PC-3 (cell line): ENCODE measurements at regions of chr2 and their contacts with region 1.

Region 1: DNA sequence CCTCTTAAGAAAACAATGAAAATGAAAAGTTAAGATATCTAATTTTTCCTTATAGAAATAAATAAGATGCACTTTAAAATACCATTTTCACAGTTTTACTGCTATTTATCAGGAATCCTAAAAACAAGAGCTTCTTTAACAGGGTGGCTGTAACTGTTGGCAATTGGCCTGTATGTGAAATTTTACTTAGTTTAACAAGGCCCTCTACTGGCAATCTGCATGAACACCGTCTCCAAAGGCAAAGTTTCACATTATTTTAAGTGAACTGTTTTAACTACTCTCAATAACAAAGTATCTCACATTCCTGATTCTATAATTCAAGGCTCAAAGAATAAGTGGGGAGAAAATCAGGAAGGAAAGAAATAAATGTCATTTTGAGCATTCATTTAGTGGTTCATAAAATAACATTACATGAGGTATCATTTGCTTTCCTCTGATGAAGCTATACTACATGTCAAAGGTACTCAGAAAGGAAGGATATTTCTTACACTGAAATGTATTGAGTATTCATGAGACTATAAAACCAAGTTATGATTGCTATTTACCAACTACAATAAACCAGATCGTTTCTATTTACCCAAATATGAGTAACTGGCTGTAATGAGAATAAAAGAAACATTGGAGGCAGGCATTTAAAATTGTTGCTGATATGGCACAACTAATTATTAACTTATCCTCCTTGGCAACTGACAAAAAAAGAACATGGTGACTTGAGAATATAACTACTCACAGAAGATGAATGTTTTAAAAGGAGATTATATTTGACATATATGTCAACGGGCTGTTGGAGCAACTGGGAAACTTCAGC is 7.0 kb downstream of the NCKAP5 start:
- DNase-seq: peak; percentile 81
- ATAC-seq: peak; percentile 91
- H3K4me3 ChIP-seq: no peak overlapping the region
- H3K27ac ChIP-seq: peak overlapping the region; percentile 67
- H3K4me1 ChIP-seq: peaks cover 27% of the 10 kb centered on the region
- H3K27me3 ChIP-seq: no peaks in the 10 kb centered on the region
- CTCF ChIP-seq: peak; percentile 90

Region 2: DNA sequence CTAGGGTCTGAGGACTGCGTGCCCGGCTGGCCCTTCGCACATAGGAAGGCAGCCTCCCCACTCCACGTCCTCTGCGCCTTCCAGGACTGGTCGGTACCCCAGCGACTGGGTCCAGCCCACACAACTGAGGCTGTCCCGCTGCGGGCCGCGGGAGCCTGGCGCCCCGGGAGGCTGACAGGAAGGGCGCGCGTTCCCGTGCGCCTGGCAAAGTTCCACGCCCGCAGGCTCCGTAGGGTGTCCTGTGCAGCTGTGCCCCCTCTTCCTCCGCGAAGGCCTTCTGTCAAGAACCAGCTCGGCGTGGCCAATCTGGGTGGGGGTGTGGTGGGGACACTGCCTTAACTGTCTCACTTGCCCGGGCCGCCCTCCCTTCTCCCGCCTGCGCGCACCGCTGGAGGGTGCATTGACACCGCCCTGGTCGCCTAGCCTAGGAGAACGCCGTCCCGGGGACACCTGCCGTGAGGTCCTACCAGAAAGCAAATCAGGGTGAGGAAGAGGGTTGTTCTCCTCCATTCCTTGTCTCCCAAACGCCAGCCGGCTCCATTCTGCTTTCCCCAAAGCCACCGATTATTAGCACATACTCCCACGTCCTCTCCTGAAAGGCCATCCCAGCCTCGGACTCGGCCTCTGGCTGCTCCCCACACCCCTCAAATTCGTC is 890.6 kb before region 1 on chr2:
- CTCF ChIA-PET with region 1: no interaction called
- POLR2A ChIA-PET with region 1: no interaction called
- intact Hi-C with region 1: loop called (anchors 10 kb)
- DNase-seq: peak; percentile 54
- ATAC-seq: peak; percentile 61
- H3K4me3 ChIP-seq: peak overlapping the region; percentile 78
- H3K27ac ChIP-seq: peak overlapping the region; percentile 13; the same call in 1 of the 2 replicates
- H3K4me1 ChIP-seq: peaks cover 24% of the 10 kb centered on the region
- H3K27me3 ChIP-seq: no peaks in the 10 kb centered on the region
- CTCF ChIP-seq: peak; percentile 26; the same call in 1 of the 2 replicates

Region 3: GRCh38 chr2:133200684-133201421 is 360.4 kb before region 1 on chr2:
- CTCF ChIA-PET with region 1: no interaction called
- POLR2A ChIA-PET with region 1: no interaction called
- intact Hi-C with region 1: loop called (anchors 2 kb)
- DNase-seq: peak; percentile 91
- ATAC-seq: peak; percentile 99
- H3K4me3 ChIP-seq: no peak overlapping the region
- H3K27ac ChIP-seq: peak overlapping the region; percentile 77
- H3K4me1 ChIP-seq: peaks cover 35% of the 10 kb centered on the region
- H3K27me3 ChIP-seq: no peaks in the 10 kb centered on the region
- CTCF ChIP-seq: no peak

Region 4: DNA sequence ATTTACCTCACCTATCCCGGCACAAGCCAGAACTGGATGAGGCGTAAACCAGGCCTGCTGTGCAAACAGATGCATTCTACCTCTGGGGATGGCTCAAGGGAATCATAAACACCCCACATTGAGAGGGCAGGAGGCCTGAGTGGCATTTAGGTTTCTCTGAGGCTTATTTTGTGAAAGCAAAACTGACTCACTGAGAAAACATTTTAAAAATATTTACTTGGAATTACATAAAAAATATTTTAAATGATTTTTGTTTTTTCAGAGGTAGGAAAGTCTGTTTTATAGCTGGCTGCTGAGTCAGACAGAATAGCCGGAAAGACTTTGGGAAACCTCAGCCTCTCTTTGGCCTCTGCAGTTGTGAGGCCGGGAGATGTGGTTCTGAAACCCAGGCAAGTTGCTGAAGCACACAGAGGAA is 237.1 kb before region 1 on chr2:
- CTCF ChIA-PET with region 1: no interaction called
- POLR2A ChIA-PET with region 1: no interaction called
- intact Hi-C with region 1: loop called (anchors 5 kb)
- DNase-seq: peak; percentile 86
- ATAC-seq: peak; percentile 94
- H3K4me3 ChIP-seq: no peak overlapping the region
- H3K27ac ChIP-seq: peak overlapping the region; percentile 95
- H3K4me1 ChIP-seq: peaks cover 48% of the 10 kb centered on the region
- H3K27me3 ChIP-seq: no peaks in the 10 kb centered on the region
- CTCF ChIP-seq: no peak

Region 5: DNA sequence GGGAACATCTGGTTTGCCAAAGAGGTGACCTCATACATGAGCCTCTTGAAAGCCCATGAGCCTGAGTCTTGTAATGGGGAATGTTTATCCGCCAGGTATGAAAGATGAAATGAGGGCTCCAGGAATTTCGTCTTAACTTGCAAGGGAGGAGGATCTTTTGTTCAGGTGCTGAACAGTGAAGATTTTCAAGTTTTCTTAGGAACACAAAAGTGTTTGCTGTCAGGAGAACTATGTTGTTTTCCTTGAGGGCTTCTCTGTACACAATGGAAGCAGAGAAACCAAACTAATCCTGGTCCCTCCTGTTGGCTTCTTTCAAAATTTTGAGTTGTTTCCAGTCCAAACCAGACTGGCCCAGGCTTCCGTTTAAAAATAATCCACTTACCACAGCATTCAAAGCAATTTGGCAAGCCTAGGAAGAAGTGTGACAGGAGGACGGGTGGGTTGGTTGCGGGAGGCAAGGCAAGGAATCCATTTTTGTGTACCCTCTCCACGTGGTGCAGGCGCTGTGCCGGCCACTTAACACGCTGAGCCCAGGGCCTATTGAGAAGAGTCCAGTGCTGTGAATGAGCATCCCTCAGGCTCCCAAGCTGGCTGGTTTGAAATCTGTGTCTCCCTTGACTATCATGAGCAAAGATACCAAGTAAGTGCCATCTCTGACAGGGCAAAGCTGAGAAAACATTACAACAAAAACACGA is 154.1 kb before region 1 on chr2:
- CTCF ChIA-PET with region 1: no interaction called
- POLR2A ChIA-PET with region 1: no interaction called
- intact Hi-C with region 1: no loop called
- DNase-seq: no peak
- ATAC-seq: no peak
- H3K4me3 ChIP-seq: no peak overlapping the region
- H3K27ac ChIP-seq: no peak overlapping the region
- H3K4me1 ChIP-seq: peaks cover 2% of the 10 kb centered on the region
- H3K27me3 ChIP-seq: no peaks in the 10 kb centered on the region
- CTCF ChIP-seq: no peak

Region 6: DNA sequence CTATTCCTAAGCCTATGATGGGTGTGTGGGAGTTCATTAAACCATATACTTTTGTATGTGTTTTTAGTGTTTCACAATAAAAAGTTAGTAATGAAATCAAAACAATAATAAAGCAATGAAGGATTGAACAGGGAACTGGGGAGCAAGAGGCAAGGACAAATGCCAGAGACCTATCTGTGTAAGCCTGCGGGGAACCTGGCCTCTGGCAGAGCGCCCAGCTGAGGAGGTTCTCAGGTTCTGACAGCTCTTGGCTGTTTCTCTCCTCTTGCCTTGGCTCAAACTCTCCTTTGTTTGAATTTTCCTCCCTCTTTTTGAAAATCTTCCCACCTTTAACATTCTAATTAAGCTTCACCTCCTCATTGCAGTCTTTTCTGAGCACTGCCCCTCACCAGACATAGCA is 207.0 kb after region 1 on chr2:
- CTCF ChIA-PET with region 1: no interaction called
- POLR2A ChIA-PET with region 1: no interaction called
- intact Hi-C with region 1: loop called (anchors 1 kb)
- DNase-seq: peak; percentile 44
- ATAC-seq: peak; percentile 58
- H3K4me3 ChIP-seq: no peak overlapping the region
- H3K27ac ChIP-seq: peak overlapping the region; percentile 32
- H3K4me1 ChIP-seq: peaks cover 22% of the 10 kb centered on the region
- H3K27me3 ChIP-seq: no peaks in the 10 kb centered on the region
- CTCF ChIP-seq: no peak

Region 7: DNA sequence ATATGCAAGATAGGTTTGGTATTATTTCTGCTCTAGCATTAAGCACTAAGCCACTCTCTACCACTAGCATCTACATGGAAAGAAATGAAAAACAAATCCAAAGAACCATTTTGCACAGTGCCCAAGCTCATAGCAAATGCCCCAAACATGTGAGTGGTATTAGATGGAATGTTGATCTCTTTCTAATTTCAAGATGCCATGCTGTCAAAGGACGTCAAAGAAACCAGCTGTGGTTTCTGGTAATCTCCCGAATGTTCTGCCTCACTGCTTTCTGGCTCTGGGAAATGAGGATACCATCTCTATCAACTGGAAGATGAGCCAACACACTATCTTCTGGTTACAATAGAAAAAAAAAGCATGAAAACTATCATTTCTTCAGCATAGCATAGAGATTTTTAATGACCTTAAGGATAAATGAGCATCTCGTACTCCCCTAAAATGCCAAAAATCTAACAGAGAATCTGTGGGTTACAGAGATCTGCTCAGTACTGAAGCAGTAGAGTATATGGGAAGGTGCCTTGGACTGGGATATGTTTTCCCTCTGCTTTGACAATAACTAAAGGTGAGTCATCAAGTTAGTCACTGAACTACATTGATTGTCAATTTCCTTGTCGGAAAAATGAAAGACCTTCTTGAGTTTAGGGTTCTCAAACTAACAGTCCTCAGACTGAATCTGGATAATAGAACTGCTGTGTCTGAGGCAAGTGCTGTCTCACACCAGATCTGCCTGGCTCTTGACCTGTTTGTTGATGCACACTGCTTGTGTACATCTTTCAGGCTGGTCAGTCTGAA is 251.8 kb after region 1 on chr2:
- CTCF ChIA-PET with region 1: no interaction called
- POLR2A ChIA-PET with region 1: no interaction called
- intact Hi-C with region 1: no loop called
- DNase-seq: peak; percentile 86
- ATAC-seq: peak; percentile 60
- H3K4me3 ChIP-seq: no peak overlapping the region
- H3K27ac ChIP-seq: peak overlapping the region; percentile 87
- H3K4me1 ChIP-seq: peaks cover 51% of the 10 kb centered on the region
- H3K27me3 ChIP-seq: no peaks in the 10 kb centered on the region
- CTCF ChIP-seq: no peak

Region 8: DNA sequence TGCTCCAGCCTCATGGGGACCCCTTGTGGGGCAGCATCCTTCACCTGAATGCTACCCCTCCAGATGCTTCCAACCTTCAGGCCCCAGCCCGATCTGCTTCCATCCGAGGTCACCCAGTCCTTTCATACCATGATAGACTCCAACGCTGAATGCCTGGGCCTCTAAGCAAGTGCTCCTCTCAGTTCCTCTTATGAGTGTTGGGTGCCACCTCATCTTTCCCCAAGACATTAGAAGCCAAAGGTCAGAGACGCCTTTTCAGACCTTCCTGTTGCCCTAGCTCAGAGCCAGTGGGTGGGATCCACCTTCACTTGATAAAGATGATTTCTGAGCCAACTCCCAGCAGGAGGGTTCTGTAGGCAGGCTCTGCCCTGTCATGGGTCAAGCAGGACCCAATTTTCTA is 518.1 kb after region 1 on chr2:
- CTCF ChIA-PET with region 1: no interaction called
- POLR2A ChIA-PET with region 1: no interaction called
- intact Hi-C with region 1: no loop called
- DNase-seq: no peak
- ATAC-seq: no peak
- H3K4me3 ChIP-seq: no peak overlapping the region
- H3K27ac ChIP-seq: no peak overlapping the region
- H3K4me1 ChIP-seq: peaks cover 7% of the 10 kb centered on the region
- H3K27me3 ChIP-seq: 0 out of 2 replicates have a peak, but pooled peaks cover 2% of the 10 kb centered on the region
- CTCF ChIP-seq: no peak